Heart right ventricle (tissue), 16 donors: ENCODE measurements at regions of chr3 and their contacts with region 1.

Region 1: GRCh38 chr3:78919021-78919755 is 848.6 kb downstream of the ROBO1 start:
- DNase-seq: no peak
- ATAC-seq: peak in 1 of 8 donors; percentile 63
- H3K4me3 ChIP-seq: no peak overlapping the region
- H3K27ac ChIP-seq: peak overlapping the region in 1 of 10 donors; percentile 32
- H3K4me1 ChIP-seq: peaks cover 0 to 18% (median 0%) of the 10 kb centered on the region in 9 donors
- H3K27me3 ChIP-seq: no peaks in the 10 kb centered on the region
- CTCF ChIP-seq: no peak

Region 2: GRCh38 chr3:79019137-79019923 is 100.1 kb after region 1 on chr3:
- intact Hi-C with region 1: loop called in 1 of 10 experiments (anchors 10 kb)
- DNase-seq: peak; percentile 68 to 75
- ATAC-seq: peak; percentile 87 to 95 (median 90)
- H3K4me3 ChIP-seq: peak overlapping the region; percentile 58 to 88 (median 68)
- H3K27ac ChIP-seq: peak overlapping the region; percentile 73 to 89 (median 81)
- H3K4me1 ChIP-seq: peaks cover 0 to 13% (median 5%) of the 10 kb centered on the region in 9 donors
- H3K27me3 ChIP-seq: peaks cover 0 to 39% (median 26%) of the 10 kb centered on the region in 7 donors
- CTCF ChIP-seq: no peak